Naive thymus-derived CD8-positive, alpha-beta T cell (primary cell): ENCODE measurements at regions of chr12 and their contacts with region 1.

Region 1: GRCh38 chr12:53079226-53080117 is at the start of gene SPRYD3:
- DNase-seq: peak; percentile 91 to 99 (median 97)
- ATAC-seq: peak; percentile 95 to 96
- H3K4me3 Mint-ChIP-seq: peak within 1 kb of the TSS; percentile 85 to 99 (median 94)
- H3K27ac Mint-ChIP-seq: peak within 1 kb of the TSS; percentile 91 to 98 (median 97)
- H3K4me1 Mint-ChIP-seq: peaks cover 20 to 59% (median 47%) of the 10 kb centered on the region in 4 donors
- H3K27me3 Mint-ChIP-seq: no peaks in the 10 kb centered on the region
- polyA plus RNA-seq, gene SPRYD3: 49.4 to 53.2 (median 51.7) TPM

Region 2: GRCh38 chr12:53005986-53006809 is 73.3 kb before region 1 on chr12 and contains the start of gene EIF4B:
- POLR2A ChIA-PET with region 1: interaction called, 20 read pairs
- DNase-seq: peak; percentile 95 to 100 (median 99)
- ATAC-seq: peak; percentile 91 to 93
- H3K4me3 Mint-ChIP-seq: peak within 1 kb of the TSS; percentile 96 to 100 (median 98)
- H3K27ac Mint-ChIP-seq: peak within 1 kb of the TSS; percentile 96 to 99 (median 99)
- H3K4me1 Mint-ChIP-seq: peaks cover 20 to 56% (median 51%) of the 10 kb centered on the region in 4 donors
- H3K27me3 Mint-ChIP-seq: peaks cover 0 to 3% (median 0%) of the 10 kb centered on the region in 5 donors
- polyA plus RNA-seq, gene EIF4B: 116 to 146 (median 124) TPM

Region 3: GRCh38 chr12:53034459-53034858 is 45.0 kb before region 1 on chr12:
- POLR2A ChIA-PET with region 1: no interaction called
- DNase-seq: no peak
- ATAC-seq: no peak
- H3K4me3 Mint-ChIP-seq: no peak overlapping the region
- H3K27ac Mint-ChIP-seq: peak overlapping the region in 4 of 10 donors; percentile 16 to 81 (median 68)
- H3K4me1 Mint-ChIP-seq: peaks cover 8 to 23% (median 10%) of the 10 kb centered on the region in 4 donors
- H3K27me3 Mint-ChIP-seq: no peaks in the 10 kb centered on the region

Region 4: GRCh38 chr12:53054112-53054833 is 25.2 kb before region 1 on chr12:
- POLR2A ChIA-PET with region 1: interaction called, 16 read pairs
- DNase-seq: peak; percentile 87 to 96 (median 92)
- ATAC-seq: peak; percentile 89
- H3K4me3 Mint-ChIP-seq: peak overlapping the region; percentile 90 to 99 (median 96)
- H3K27ac Mint-ChIP-seq: peak overlapping the region; percentile 82 to 97 (median 94)
- H3K4me1 Mint-ChIP-seq: peaks cover 7 to 21% (median 16%) of the 10 kb centered on the region in 4 donors
- H3K27me3 Mint-ChIP-seq: peaks cover 0 to 2% (median 0%) of the 10 kb centered on the region in 5 donors

Region 5: GRCh38 chr12:53065975-53066931 is 13.2 kb before region 1 on chr12:
- POLR2A ChIA-PET with region 1: interaction called, 14 read pairs
- DNase-seq: peak; percentile 31 to 75 (median 60)
- ATAC-seq: peak; percentile 63 to 83
- H3K4me3 Mint-ChIP-seq: no peak overlapping the region
- H3K27ac Mint-ChIP-seq: peak overlapping the region in 8 of 10 donors; percentile 33 to 88 (median 68)
- H3K4me1 Mint-ChIP-seq: peaks cover 12 to 31% (median 18%) of the 10 kb centered on the region in 4 donors
- H3K27me3 Mint-ChIP-seq: no peaks in the 10 kb centered on the region

Region 6: GRCh38 chr12:53098982-53099651 is 19.6 kb after region 1 on chr12:
- POLR2A ChIA-PET with region 1: interaction called, 58 read pairs
- DNase-seq: peak; percentile 77 to 93 (median 86)
- ATAC-seq: peak; percentile 33 to 39
- H3K4me3 Mint-ChIP-seq: peak overlapping the region; percentile 79 to 91 (median 86)
- H3K27ac Mint-ChIP-seq: peak overlapping the region; percentile 56 to 93 (median 82)
- H3K4me1 Mint-ChIP-seq: peaks cover 39 to 62% (median 58%) of the 10 kb centered on the region in 4 donors
- H3K27me3 Mint-ChIP-seq: peaks cover 0 to 1% (median 0%) of the 10 kb centered on the region in 5 donors

Region 7: GRCh38 chr12:53145383-53146260 is 66.2 kb after region 1 on chr12:
- POLR2A ChIA-PET with region 1: no interaction called
- DNase-seq: no peak
- ATAC-seq: no peak
- H3K4me3 Mint-ChIP-seq: no peak overlapping the region
- H3K27ac Mint-ChIP-seq: no peak overlapping the region
- H3K4me1 Mint-ChIP-seq: no peaks in the 10 kb centered on the region
- H3K27me3 Mint-ChIP-seq: no peaks in the 10 kb centered on the region

Region 8: GRCh38 chr12:53159195-53159839 is 79.8 kb after region 1 on chr12:
- POLR2A ChIA-PET with region 1: no interaction called
- DNase-seq: peak; percentile 78 to 93 (median 86)
- ATAC-seq: peak; percentile 96 to 99
- H3K4me3 Mint-ChIP-seq: peak overlapping the region in 1 of 10 donors; percentile 3
- H3K27ac Mint-ChIP-seq: peak overlapping the region in 7 of 10 donors; percentile 0 to 87 (median 64)
- H3K4me1 Mint-ChIP-seq: peaks cover 4 to 12% (median 8%) of the 10 kb centered on the region in 4 donors
- H3K27me3 Mint-ChIP-seq: no peaks in the 10 kb centered on the region